ENCODE measurements at regions of chr19 and their contacts with region 1.

Region 1: DNA sequence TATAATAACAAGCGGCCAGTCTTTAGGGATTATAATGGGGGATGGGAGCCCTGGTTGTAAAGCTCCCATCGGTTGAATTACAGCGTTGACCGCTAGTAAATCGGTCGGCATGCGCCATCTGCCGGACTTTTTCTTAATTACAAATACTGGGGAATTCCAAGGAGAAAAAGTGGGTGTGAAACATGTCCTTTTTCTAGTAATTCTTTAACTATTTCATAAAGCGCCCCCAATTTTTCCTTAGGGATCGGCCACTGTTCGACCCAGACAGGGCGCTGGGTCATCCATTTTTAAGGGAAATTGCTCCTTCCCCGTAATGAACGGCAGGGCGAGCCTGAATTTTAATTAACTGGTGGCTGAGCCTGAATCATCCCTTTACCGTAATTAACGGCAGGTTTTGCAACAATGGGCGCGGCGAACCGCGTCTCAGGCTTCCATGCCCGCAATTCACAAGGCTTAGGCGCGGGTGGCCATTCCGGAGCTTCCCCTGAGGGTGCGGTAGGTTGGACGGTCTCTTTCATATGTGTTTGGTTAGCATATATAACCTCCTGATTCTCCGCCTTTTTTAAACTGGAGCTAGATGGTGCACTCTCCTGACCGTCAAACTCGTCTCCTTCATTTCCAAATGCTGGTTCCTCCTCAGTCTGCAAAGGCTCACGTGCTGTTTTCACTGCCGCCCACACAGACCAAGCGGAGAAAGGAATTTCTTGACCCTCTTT is 30.2 kb upstream of the EVI5L start:
- DNase-seq: peak; percentile 55
- CTCF ChIP-seq: peak; percentile 51

Region 2: DNA sequence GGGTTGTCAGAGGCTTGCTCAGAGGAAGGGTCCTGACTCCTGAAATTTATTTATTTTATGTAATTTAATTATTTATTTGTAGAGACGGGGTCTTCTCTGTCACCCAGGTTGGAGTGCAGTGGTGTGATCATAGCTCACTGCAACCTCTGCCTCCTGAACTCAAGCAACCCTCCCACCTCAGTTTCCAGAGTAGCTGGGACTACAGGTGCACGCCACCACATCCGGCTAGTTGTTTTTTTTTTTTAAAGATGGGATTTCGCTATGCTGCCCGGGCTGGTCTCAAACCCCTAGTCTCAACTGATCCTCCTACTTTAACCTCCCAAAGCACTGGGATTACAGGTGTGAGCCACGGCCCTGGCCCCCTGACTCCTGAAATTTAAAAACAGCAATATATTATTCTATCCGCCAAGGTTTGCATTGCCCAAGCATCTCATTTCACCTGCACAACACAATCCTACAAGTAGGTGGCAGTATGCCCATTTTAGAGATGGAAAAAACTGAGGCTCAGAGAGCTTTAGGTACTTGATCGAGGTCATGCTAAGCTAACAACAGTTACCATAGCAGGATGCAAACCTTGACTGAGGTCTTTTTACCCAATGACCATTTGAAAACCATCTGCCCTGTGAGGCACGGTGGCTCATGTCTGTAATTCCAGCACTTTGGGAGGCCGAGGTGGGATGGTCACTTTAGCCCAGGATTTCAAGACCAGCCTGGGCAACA is 432.9 kb before region 1 on chr19:
- in situ Hi-C with region 1: loop called (anchors 25 kb)
- DNase-seq: peak; percentile 74
- CTCF ChIP-seq: peak; percentile 70

Region 3: DNA sequence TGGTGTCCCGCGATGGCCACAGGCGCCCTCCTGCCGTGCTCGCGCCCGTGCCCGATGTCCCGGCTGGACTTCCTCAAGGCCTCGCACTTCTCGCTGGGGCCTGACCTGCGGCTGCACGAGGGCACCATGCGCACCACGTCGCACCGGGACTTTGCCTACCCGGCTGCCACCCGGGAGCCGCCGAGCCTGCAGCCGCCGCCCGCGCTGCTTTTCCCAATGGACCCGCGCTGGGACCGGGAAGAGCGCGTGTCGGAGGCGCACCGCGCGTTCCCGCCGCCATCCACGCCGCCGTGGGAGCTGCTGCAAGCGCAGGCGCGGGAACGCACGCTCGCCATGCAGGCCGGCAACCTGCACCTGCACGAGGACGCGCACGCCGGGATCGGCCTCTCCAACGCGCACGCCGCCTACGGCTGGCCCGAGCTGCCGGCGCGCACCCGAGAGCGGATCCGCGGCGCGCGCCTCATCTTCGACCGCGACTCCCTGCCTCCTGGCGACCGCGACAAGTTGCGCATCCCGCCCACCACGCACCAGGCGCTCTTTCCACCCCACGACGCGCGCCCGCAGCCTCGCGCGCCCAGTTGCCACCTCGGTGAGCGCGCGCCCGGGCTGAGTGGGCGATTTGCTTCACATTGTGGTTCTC is 298.9 kb before region 1 on chr19:
- in situ Hi-C with region 1: no loop called
- DNase-seq: peak; percentile 74
- CTCF ChIP-seq: no peak

Region 4: DNA sequence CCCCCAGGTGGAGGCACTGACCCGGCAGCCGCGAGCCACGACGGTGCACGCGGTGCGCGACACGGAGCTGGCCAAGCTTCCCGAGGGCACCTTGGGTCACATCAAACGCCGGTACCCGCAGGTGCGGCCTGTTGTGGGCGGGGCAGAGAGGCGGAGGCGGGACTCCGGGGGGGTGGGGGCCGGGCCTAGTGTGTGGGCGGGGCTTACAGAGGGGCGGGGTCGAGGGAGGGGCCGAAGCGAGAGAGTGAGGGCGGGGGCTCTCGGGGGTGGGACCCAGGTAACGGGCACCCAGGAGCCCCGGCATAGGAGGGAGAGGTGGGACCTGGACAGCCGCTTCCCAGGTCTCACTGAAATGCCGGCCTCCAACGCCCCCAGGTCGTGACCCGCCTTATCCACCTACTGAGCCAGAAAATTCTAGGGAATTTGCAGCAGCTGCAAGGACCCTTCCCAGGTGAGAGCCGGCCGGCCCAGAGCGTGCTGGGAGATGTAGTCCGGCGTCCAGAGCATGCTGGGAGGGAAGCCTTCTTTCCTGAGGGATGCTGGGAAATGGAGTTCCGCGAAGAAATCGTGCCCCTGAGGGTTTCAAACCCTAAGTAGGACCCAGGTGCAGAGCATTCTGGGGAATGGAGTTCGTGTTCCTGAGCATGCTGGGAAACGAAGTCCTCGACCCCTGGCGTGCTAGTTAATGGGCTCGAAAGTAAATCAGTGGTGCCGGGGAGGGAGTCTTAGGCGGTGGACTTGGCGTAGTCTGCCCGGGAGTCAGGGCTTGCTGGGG is 248.6 kb before region 1 on chr19:
- in situ Hi-C with region 1: loop called (anchors 25 kb)
- DNase-seq: peak; percentile 69
- CTCF ChIP-seq: no peak

Region 5: GRCh38 chr19:7665076-7665475 is 134.7 kb before region 1 on chr19:
- in situ Hi-C with region 1: loop called (anchors 10 kb)
- DNase-seq: no peak
- CTCF ChIP-seq: no peak

Region 6: GRCh38 chr19:7705387-7706187 is 94.2 kb before region 1 on chr19:
- in situ Hi-C with region 1: loop called (anchors 10 kb)
- DNase-seq: no peak
- CTCF ChIP-seq: no peak

Region 7: GRCh38 chr19:8224394-8225145 is 424.8 kb after region 1 on chr19:
- in situ Hi-C with region 1: no loop called
- DNase-seq: no peak
- CTCF ChIP-seq: no peak

Measured in GM13977 (cell line).